GM12878 (cell line): ENCODE measurements at regions of chr19 and their contacts with region 1.

Region 1: DNA sequence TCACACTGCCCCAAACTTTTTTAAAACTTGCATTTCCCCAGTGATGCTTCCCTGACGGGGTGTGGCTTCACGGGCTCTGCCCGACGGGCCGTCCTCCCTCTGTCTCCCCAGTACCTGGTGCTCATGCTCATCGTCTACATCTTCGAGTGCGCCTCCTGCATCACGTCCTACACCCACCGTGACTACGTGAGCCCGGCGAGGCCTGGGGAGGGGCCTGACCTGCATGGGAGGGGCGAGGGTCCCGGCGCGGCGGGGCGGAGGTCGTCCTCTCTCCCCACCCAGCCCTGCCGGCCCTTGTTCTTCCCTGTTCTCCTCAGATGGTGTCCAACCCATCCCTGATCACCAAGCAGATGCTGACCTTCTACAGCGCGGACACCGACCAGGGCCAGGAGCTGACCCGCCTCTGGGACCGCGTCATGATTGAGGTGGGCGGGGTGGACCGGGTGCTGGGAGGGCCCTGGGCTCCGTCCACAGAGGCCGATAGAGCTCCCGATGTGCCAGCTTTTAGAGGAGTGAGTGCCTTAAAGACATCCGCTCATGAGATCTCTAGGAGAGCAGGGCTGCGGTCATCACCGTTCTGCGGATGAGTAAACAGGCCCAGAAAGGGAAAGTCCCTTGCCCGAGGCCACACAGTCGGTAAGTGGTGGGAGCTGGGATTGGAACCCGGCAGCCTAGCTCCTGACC is 6.9 kb downstream of the UPK1A start:
- DNase-seq: no peak
- ATAC-seq: peak; percentile 94
- H3K4me3 ChIP-seq: peak overlapping the region; percentile 67
- H3K27ac ChIP-seq: no peak overlapping the region
- H3K4me1 ChIP-seq: peaks cover 4% of the 10 kb centered on the region
- H3K27me3 ChIP-seq: no peaks in the 10 kb centered on the region
- CTCF ChIP-seq: no peak
- EP300 ChIP-seq: no peak
- POLR2A ChIP-seq: no peak
- RAD21 ChIP-seq: no peak

Region 2: DNA sequence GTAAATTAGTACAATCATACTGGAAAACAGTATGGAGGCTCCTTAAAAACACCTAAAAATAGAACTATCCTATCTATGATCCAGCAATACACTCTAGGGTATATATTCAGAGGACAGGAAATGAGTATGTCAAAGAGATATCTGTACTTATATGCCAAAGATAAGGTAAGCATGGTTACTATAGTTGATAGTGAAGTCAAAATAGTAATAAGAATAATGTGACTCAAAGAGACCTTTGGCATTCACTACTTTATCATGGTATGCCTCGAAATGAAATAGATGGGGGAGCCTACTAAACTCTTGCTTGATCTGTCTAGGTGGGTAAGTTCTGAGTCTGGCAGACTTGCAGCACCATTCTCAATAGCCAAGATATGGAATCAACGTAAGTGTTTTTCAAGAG is 488.4 kb before region 1 on chr19:
- CTCF ChIA-PET with region 1: no interaction called
- POLR2A ChIA-PET with region 1: interaction called, 11 read pairs
- RAD21 ChIA-PET with region 1: no interaction called
- SMC1A ChIA-PET with region 1: no interaction called
- in situ Hi-C with region 1: no loop called
- intact Hi-C with region 1: no loop called
- DNase-seq: no peak
- ATAC-seq: no peak
- H3K4me3 ChIP-seq: no peak overlapping the region
- H3K27ac ChIP-seq: no peak overlapping the region
- H3K4me1 ChIP-seq: no peaks in the 10 kb centered on the region
- H3K27me3 ChIP-seq: no peaks in the 10 kb centered on the region
- CTCF ChIP-seq: no peak
- EP300 ChIP-seq: no peak
- POLR2A ChIP-seq: no peak
- RAD21 ChIP-seq: no peak